Heart left ventricle (tissue), 16 donors: ENCODE measurements at regions of chr2 and their contacts with region 1.

Region 1: DNA sequence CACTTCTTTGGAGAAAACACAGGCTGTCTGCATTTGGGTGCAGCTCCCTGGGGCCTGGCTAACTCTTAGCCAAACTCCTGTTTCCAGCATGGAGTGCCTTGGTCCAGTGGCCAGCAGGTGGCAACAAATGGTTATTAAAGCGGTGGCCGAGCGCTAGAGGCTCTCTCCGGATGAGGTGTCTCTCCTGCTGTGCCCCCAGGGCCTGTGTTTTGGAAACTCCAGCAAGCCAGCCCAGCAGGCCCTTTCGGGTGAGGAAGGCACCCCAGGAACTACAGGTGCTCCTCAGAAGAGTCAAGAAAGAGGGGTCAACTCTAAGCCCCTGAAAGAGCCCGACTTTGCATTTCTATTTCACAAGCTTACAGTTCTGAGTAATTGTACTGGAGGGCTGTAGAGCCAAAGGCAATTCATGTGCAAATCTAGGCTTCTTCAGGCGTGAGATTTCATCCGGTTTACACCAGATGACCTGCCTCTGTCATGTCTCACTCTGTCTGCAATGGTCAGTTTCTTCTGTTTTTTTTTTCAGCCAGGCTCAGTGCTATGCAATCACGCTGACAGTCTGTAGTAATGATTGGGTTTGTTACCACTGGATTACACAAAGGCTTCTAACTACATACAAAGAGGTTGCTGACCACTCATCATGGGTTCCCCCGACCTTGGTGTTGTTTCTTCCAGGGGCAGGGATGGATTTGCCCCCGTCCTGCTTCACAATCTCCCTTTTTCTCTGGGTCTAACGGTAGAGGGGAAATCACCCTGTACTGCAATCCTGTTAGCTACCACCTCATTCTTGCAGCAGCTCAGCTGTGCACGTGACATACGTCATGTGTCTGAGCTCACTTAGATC is 7.6 kb upstream of the CHRNA1 start:
- DNase-seq: peak; percentile 78 to 86 (median 82)
- ATAC-seq: peak; percentile 92 to 98 (median 96)
- H3K4me3 ChIP-seq: peak overlapping the region in 1 of 12 donors; percentile 24
- H3K27ac ChIP-seq: peak overlapping the region in 6 of 12 donors; percentile 24 to 61 (median 38)
- H3K4me1 ChIP-seq: peaks cover 0 to 15% (median 8%) of the 10 kb centered on the region in 12 donors
- H3K27me3 ChIP-seq: no peaks in the 10 kb centered on the region
- CTCF ChIP-seq: peak; percentile 67 to 90 (median 86)
- POLR2A ChIP-seq: no peak

Region 2: GRCh38 chr2:173472112-173472511 is 1299.7 kb before region 1 on chr2:
- intact Hi-C with region 1: no loop called
- DNase-seq: no peak
- ATAC-seq: no peak
- H3K4me3 ChIP-seq: no peak overlapping the region
- H3K27ac ChIP-seq: no peak overlapping the region
- H3K4me1 ChIP-seq: no peaks in the 10 kb centered on the region
- H3K27me3 ChIP-seq: no peaks in the 10 kb centered on the region
- CTCF ChIP-seq: no peak
- POLR2A ChIP-seq: no peak

Region 3: DNA sequence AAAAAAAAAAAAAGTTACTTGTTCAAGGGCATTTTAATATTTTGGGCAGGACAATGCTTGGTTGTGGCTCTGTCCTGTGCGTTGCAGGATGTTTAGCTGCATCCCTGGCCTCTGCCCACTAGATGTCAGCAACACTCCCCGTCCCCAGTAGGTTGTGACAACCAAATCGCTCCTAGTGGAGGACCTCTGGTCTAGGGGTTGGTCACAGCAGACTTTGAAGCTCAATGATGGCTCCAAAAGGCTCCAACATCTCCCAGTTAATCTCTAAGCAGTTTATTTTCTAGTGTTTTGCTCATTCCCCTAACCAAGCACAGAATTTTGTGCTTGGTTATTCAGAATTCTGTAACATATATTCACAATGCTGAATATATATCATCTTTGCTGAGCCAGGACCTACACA is 74.6 kb before region 1 on chr2:
- intact Hi-C with region 1: no loop called
- DNase-seq: peak in 4 of 5 donors; percentile 45 to 52 (median 49)
- ATAC-seq: peak in 3 of 4 donors; percentile 83 to 89 (median 87)
- H3K4me3 ChIP-seq: no peak overlapping the region
- H3K27ac ChIP-seq: no peak overlapping the region
- H3K4me1 ChIP-seq: no peaks in the 10 kb centered on the region
- H3K27me3 ChIP-seq: no peaks in the 10 kb centered on the region
- CTCF ChIP-seq: peak; percentile 42 to 82 (median 74)
- POLR2A ChIP-seq: no peak

Region 4: DNA sequence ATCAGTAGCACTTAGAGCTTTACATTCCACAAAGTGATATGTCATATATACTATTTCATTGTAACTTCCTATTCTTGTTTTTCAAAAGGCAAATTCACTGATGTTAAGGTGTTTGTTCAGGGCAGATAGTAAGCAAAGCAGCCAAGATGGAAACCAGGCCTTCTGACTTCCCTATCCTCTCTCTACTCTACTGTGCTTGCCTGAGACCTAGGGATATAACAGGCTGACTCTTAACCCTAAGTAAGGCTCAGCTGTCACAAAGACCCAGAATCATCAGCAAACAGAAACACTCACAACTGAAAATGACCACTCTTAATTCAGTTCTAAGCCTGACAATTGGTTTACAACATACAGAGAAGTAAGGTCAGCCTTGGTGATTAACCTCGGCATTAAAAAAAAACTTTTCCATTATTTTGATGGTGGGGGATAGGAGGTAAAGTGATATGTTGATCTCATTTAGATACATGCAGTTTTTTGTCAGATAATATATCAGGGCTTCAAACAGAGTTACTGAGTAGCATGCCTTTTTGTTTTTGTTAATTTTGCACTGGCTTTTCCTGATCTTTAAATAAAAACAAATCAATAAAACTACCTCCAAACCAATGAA is 87.8 kb after region 1 on chr2:
- intact Hi-C with region 1: no loop called
- DNase-seq: no peak
- ATAC-seq: no peak
- H3K4me3 ChIP-seq: no peak overlapping the region
- H3K27ac ChIP-seq: no peak overlapping the region
- H3K4me1 ChIP-seq: no peaks in the 10 kb centered on the region
- H3K27me3 ChIP-seq: no peaks in the 10 kb centered on the region
- CTCF ChIP-seq: no peak
- POLR2A ChIP-seq: no peak

Region 5: DNA sequence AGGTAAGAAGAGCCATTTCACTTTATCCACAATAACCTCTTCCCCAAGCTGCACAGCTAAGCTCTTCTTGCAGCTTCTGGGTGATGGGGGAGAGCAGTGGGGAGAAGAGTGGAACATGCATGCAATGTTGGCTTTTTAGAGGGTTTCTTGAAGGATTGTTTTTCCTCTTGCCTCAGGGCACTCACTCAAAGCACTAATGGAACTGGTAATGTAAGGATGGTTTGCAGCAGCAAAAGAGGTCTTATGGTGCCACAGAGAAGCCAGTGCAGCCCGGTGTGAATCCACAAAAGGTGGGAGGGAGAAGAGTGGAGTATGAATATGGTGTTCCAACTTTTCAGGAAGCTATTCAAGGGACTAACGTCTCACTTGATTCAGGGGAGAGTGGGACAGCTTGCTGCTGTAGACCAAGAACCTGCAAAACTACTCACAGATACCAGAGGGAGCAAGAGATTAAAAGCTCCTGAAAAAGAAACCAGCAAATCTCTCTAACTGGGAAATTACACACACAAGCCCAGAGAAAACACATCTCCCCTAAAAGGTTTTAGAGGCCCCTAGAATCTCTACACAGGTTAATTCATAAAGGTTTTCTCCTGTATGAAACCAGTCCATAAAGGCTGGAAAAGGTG is 116.9 kb after region 1 on chr2:
- intact Hi-C with region 1: loop called in 1 of 10 experiments (anchors 10 kb)
- DNase-seq: no peak
- ATAC-seq: no peak
- H3K4me3 ChIP-seq: no peak overlapping the region
- H3K27ac ChIP-seq: no peak overlapping the region
- H3K4me1 ChIP-seq: no peaks in the 10 kb centered on the region
- H3K27me3 ChIP-seq: no peaks in the 10 kb centered on the region
- CTCF ChIP-seq: no peak
- POLR2A ChIP-seq: no peak

Region 6: DNA sequence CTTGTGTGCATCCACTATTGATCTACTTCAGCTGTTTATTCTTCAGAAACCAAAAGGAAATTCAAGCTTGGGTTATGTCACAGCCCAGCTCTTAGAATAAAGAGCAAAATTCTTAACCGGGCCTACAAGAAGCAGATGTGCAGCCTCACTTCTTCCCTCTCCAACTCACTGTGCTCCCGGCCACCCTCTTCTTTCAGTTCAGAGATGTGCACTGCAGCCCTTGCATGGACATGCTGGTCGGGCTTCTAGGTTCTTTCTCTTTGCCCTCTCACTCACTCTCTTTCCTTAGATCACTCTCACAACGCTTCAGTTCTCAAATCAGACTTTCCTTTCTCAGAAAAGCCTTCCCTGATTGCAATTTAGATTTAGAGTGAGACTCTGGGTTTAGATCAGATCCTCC is 129.2 kb after region 1 on chr2:
- intact Hi-C with region 1: loop called in 1 of 10 experiments (anchors 10 kb)
- DNase-seq: peak in 3 of 5 donors; percentile 9 to 25 (median 21)
- ATAC-seq: peak; percentile 39 to 58 (median 54)
- H3K4me3 ChIP-seq: peak overlapping the region in 4 of 12 donors; percentile 14 to 35 (median 26)
- H3K27ac ChIP-seq: peak overlapping the region in 6 of 12 donors; percentile 11 to 49 (median 22)
- H3K4me1 ChIP-seq: peaks cover 0 to 10% (median 0%) of the 10 kb centered on the region in 12 donors
- H3K27me3 ChIP-seq: no peaks in the 10 kb centered on the region
- CTCF ChIP-seq: no peak
- POLR2A ChIP-seq: no peak

Region 7: DNA sequence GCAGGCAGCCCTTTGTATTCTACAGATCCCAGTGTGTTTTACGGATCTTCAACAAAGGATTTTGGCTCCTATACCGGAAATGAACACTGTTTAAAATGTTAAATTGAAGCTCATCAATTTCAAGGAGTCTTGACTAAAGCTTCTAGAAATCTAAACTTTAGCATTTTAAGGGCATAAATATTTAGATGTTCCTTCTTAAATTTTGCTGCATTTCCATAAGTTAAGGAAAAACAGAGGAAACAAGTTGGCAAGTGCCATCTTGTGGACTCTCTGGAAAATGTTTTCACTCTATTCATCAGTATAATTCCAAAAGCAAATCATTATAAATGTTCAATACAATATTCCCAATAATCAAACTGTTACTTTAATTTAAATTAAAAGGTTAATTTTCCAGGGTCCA is 213.8 kb after region 1 on chr2:
- intact Hi-C with region 1: loop called (anchors 1 to 5 kb)
- DNase-seq: no peak
- ATAC-seq: no peak
- H3K4me3 ChIP-seq: no peak overlapping the region
- H3K27ac ChIP-seq: no peak overlapping the region
- H3K4me1 ChIP-seq: peaks cover 0 to 9% (median 0%) of the 10 kb centered on the region in 12 donors
- H3K27me3 ChIP-seq: no peaks in the 10 kb centered on the region
- CTCF ChIP-seq: peak; percentile 10 to 69 (median 56)
- POLR2A ChIP-seq: no peak